ENCODE measurements at regions of chr4 and their contacts with region 1.

Region 1: DNA sequence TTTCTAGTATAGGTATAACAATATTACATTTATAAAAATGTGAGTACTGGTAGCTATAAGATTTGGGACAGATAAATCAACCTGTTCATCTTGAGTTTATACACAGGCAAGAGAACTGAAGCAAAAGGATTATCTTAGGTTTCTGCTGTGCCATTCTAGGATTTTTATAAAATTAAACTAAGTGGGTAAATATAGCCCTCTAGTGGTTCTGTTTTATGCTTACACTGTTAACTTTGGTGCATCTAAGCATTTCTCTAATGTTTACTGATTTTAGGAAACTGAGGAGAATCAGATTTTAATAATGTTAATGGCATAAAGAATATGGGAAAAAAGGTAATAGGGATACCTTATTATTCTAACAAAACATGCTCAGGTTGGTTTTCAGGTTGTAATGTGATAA is 1.1 kb upstream of the RRH start:
- DNase-seq: no peak
- ATAC-seq: peak; percentile 66
- H3K4me3 ChIP-seq: no peak overlapping the region
- H3K27ac ChIP-seq: no peak overlapping the region
- H3K4me1 ChIP-seq: no peaks in the 10 kb centered on the region
- H3K27me3 ChIP-seq: no peaks in the 10 kb centered on the region
- CTCF ChIP-seq: peak; percentile 41 to 67 (median 45); a peak in 4 of 6 replicates
- POLR2A ChIP-seq: no peak
- RAD21 ChIP-seq: peak; percentile 62

Region 2: GRCh38 chr4:109864134-109864533 is 37.4 kb after region 1 on chr4:
- CTCF ChIA-PET with region 1: no interaction called
- POLR2A ChIA-PET with region 1: no interaction called
- RAD21 ChIA-PET with region 1: no interaction called
- intact Hi-C with region 1: no loop called
- DNase-seq: no peak
- ATAC-seq: 0 out of 2 replicates have a peak, but pooled peaks have one; percentile 54
- H3K4me3 ChIP-seq: no peak overlapping the region
- H3K27ac ChIP-seq: no peak overlapping the region
- H3K4me1 ChIP-seq: no peaks in the 10 kb centered on the region
- H3K27me3 ChIP-seq: no peaks in the 10 kb centered on the region
- CTCF ChIP-seq: no peak
- POLR2A ChIP-seq: no peak
- RAD21 ChIP-seq: no peak

Region 3: DNA sequence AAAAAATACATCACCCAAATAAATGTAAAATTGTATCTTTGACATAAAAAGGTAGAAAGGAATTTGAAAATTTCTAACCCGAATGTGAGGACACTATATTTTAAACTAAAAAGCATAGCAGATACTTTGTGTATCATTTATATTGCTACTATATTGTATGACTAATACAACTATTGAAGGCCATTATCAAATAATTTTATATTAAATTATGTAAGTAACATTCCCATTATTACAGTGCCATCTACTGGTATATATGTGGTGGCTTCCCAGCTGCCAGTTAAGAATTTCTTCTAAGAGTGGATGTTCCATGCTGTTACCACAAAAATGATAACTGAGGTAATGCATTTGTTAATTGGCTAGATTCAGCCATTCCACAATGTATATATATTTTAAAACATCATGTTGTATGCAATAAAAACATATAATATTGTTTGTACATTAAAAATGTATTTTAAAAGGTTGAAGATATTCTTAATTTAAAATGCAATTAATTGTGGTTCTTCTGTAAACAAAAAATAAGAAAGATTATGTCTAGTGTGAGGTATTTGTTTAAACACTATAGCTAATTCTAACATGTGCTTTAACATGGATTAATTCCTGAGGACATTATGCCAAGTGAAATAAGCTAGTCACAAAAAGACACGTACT is 151.3 kb after region 1 on chr4:
- CTCF ChIA-PET with region 1: interaction called, 6 read pairs
- POLR2A ChIA-PET with region 1: no interaction called
- RAD21 ChIA-PET with region 1: no interaction called
- intact Hi-C with region 1: loop called (anchors 5 kb)
- DNase-seq: peak; percentile 27
- ATAC-seq: peak; percentile 68
- H3K4me3 ChIP-seq: no peak overlapping the region
- H3K27ac ChIP-seq: no peak overlapping the region
- H3K4me1 ChIP-seq: peaks cover 0 to 4% of the 10 kb centered on the region in 2 experiments; a peak in 1 of 4 replicates
- H3K27me3 ChIP-seq: no peaks in the 10 kb centered on the region
- CTCF ChIP-seq: peak; percentile 57 to 75 (median 58)
- POLR2A ChIP-seq: no peak
- RAD21 ChIP-seq: peak; percentile 80